Ascending aorta (tissue), 2 donors: ENCODE measurements at regions of chr7 and their contacts with region 1.

Region 1: DNA sequence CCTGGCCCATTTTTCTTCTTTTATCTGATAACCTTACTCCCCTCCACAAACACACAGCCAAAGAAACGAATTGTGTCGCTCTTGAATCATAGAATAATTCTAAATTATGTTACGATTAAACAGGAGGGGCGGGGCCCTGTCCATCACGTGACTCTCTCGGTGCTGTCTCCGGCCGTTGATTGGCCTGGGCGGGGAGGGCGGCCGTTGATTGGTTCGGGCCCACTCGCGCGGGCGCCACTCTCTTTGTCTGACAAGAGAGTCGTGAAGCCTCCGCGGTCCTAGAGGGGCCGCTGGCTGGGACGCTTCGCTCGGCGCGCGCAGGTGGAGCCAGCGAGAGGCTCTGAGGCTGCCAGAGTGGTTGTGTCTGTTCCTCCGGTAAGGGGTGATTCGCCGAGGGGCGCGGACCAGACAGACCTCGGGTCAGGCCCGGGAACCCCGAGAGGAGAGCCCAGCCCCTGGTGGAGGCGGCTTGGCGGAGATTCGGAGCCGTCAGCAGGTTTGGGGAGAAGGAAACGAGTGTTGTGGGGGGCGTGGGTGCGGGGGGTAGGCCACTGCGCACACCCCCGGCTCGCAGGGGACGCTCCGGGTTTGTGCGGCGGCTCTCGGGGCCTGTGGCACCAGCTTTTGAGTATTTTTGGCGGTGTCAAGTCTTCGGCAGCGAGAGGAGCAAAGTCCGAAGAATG is at the start of gene ZNF789:
- DNase-seq: peak; percentile 94 to 99
- H3K4me3 ChIP-seq: peak within 1 kb of the TSS; percentile 61 to 95
- H3K27ac ChIP-seq: peak within 1 kb of the TSS; percentile 83 to 86
- H3K4me1 ChIP-seq: peaks cover 0 to 14% of the 10 kb centered on the region in 2 donors
- H3K27me3 ChIP-seq: no peaks in the 10 kb centered on the region
- CTCF ChIP-seq: no peak
- total RNA-seq, gene ZNF789: 4.2 TPM

Region 2: GRCh38 chr7:99143853-99144672 is 328.6 kb before region 1 on chr7 and contains the start of gene SMURF1:
- intact Hi-C with region 1: no loop called
- DNase-seq: peak in 1 of 2 donors; percentile 79
- H3K4me3 ChIP-seq: peak within 1 kb of the TSS; percentile 97 to 100
- H3K27ac ChIP-seq: peak within 1 kb of the TSS; percentile 99 to 100
- H3K4me1 ChIP-seq: peaks cover 3 to 11% of the 10 kb centered on the region in 2 donors
- H3K27me3 ChIP-seq: no peaks in the 10 kb centered on the region
- CTCF ChIP-seq: peak in 1 of 3 experiments; percentile 35
- total RNA-seq, gene SMURF1: 26.5 TPM

Region 3: DNA sequence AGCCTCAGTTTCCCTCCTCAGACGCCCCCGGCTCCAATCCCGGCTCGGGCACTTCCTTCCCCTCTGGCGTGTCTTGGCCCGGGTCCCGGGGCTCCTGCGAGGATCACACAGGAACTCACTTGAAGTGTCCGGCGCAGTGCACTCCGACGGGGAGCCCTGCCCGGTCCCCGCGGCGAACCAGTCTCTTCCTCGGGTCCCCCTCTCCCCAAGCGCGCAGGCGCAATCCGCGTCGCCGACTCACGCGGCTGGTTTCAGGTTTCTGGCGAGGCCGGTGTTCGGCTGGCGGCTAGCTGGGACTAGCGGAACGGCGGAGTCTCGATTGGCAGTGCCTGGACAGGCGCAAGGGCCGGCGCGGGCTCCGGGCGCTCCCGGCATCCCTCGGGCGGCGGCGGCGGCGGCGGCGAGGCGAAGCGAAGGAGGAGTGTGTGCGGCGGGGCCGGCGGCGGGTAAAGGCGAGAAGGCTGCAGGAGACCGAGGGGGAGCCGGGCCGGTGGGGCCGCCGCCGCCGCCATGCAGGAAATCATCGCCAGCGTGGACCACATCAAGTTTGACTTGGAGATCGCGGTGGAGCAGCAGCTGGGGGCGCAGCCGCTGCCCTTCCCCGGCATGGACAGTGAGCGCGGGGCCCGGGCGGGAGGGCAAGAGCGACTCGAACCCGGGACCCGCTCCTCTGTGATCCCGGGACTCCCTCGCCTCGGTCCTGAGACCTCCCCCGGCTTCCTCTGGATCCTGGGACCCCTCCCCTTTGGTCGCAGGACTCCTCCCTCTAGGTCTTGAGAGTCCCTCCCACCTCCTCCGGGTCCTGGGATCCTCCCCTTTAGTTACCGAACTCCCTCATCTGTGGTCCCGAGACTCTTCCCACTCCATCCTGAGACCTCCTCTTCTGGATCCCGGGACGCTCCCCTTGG is 33.9 kb before region 1 on chr7 and contains the starts of genes CPSF4 and PTCD1:
- intact Hi-C with region 1: loop called (anchors 2 kb)
- DNase-seq: peak; percentile 79 to 97
- H3K4me3 ChIP-seq: peak within 1 kb of the TSS; percentile 80 to 91
- H3K27ac ChIP-seq: peak within 1 kb of the TSS; percentile 85 to 87
- H3K4me1 ChIP-seq: peaks cover 5 to 22% of the 10 kb centered on the region in 2 donors
- H3K27me3 ChIP-seq: no peaks in the 10 kb centered on the region
- CTCF ChIP-seq: no peak
- total RNA-seq, gene CPSF4: 38.0 TPM
- total RNA-seq, gene PTCD1: 2.6 TPM